Activated naive CD4-positive, alpha-beta T cell treated with anti-CD3 and anti-CD28 coated beads, Interleukin-2, amount 10 ng/mL, durations not matched to agents 7 days and 5 days (primary cell): ENCODE measurements at regions of chr1 and their contacts with region 1.

Region 1: GRCh38 chr1:30743584-30744059 is 14.0 kb downstream of the LAPTM5 start:
- DNase-seq: peak; percentile 85
- H3K4me3 Mint-ChIP-seq: peak overlapping the region; percentile 78
- H3K27ac Mint-ChIP-seq: peak overlapping the region; percentile 99
- H3K4me1 Mint-ChIP-seq: peaks cover 100% of the 10 kb centered on the region
- H3K27me3 Mint-ChIP-seq: no peaks in the 10 kb centered on the region

Region 2: DNA sequence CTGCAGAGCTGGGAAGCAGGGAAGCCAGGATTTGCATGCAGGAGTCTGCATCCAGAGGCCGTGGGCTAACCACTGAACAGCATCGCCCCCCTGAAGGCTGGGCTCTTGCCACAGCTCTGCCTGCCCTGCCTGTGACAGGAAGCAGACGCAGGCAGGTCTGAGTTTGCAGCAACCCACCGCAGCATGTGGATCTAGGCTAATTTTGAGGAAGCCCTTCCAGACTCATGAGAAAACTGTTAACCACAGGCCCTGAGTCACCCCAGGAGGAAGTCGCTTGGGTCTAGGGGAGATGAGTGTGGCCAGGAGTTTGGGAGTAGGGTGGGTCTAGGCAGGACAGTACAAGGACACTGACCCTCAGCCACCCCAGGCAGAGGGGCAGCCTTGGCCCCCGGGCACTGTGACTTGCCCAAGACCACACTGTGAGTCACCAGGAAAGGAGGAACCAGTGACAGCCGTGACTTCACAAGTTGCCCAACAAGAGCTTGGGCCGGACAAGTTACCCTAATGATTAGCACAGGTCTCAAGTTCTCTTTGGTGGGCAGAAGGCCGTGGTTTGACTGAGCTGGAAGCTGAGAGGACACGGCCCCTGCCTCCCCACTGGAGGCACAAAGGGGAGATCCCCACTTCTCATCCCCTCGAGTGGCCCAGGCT is 13.0 kb after region 1 on chr1:
- CTCF ChIA-PET with region 1: interaction called, 23 read pairs
- DNase-seq: peak; percentile 82
- H3K4me3 Mint-ChIP-seq: peak overlapping the region; percentile 98
- H3K27ac Mint-ChIP-seq: peak overlapping the region; percentile 96
- H3K4me1 Mint-ChIP-seq: peaks cover 84% of the 10 kb centered on the region
- H3K27me3 Mint-ChIP-seq: no peaks in the 10 kb centered on the region